GM12878 (cell line): ENCODE measurements at regions of chr20 and their contacts with region 1.

Region 1: DNA sequence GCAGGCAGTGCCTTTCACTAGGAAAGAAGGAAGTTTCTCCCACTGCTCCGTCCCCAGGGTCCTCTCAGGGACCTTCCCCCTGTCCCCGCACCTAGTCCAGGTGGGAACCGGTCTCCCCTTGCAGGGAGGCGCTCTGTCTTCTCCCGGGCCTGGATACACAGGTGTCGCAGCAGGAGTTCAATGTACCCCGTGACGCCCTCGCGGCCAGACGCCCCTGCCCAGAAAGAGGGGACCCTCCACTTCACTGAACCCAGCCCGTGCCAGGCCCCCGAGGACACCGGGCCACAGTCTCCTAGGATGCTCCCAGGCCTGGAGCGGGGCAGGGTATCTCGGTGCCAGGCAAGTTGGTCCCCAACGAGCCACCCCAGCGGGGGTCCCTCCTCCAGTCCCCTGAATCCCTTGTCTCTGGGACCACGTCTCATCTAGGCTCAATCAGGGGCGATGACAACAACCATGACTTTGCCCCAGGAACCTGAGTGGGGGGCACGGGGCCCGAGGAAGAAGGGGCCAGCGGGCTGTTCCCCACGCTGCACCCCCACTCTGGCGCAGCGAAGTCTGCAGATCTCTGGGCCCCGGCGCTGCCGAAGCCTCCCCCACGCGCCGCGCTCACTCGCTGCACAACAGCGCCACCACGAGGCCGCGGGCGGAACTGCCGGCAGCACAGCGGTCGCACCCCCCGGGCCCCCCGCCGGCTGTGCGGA is 103.0 kb downstream of the EDN3 start:
- DNase-seq: no peak
- ATAC-seq: peak; percentile 75
- H3K4me3 ChIP-seq: no peak overlapping the region
- H3K27ac ChIP-seq: no peak overlapping the region
- H3K4me1 ChIP-seq: no peaks in the 10 kb centered on the region
- H3K27me3 ChIP-seq: peaks cover 0 to 2% of the 10 kb centered on the region in 2 experiments; a peak in 2 of 4 replicates
- CTCF ChIP-seq: peak; percentile 68 to 84 (median 78)
- EP300 ChIP-seq: no peak
- POLR2A ChIP-seq: no peak
- RAD21 ChIP-seq: peak; percentile 65

Region 2: GRCh38 chr20:59331729-59332329 is 71.6 kb before region 1 on chr20:
- CTCF ChIA-PET with region 1: no interaction called
- POLR2A ChIA-PET with region 1: no interaction called
- RAD21 ChIA-PET with region 1: no interaction called
- SMC1A ChIA-PET with region 1: no interaction called
- in situ Hi-C with region 1: no loop called
- intact Hi-C with region 1: loop called (anchors 2 kb)
- DNase-seq: no peak
- ATAC-seq: no peak
- H3K4me3 ChIP-seq: no peak overlapping the region
- H3K27ac ChIP-seq: no peak overlapping the region
- H3K4me1 ChIP-seq: no peaks in the 10 kb centered on the region
- H3K27me3 ChIP-seq: peaks cover 9 to 10% of the 10 kb centered on the region in 2 experiments
- CTCF ChIP-seq: no peak
- EP300 ChIP-seq: no peak
- POLR2A ChIP-seq: no peak
- RAD21 ChIP-seq: no peak

Region 3: GRCh38 chr20:59458645-59459044 is 55.2 kb after region 1 on chr20:
- CTCF ChIA-PET with region 1: no interaction called
- POLR2A ChIA-PET with region 1: no interaction called
- RAD21 ChIA-PET with region 1: no interaction called
- SMC1A ChIA-PET with region 1: no interaction called
- in situ Hi-C with region 1: no loop called
- intact Hi-C with region 1: no loop called
- DNase-seq: no peak
- ATAC-seq: no peak
- H3K4me3 ChIP-seq: no peak overlapping the region
- H3K27ac ChIP-seq: no peak overlapping the region
- H3K4me1 ChIP-seq: no peaks in the 10 kb centered on the region
- H3K27me3 ChIP-seq: peaks cover 0 to 3% of the 10 kb centered on the region in 2 experiments; a peak in 1 of 4 replicates
- CTCF ChIP-seq: no peak
- EP300 ChIP-seq: no peak
- POLR2A ChIP-seq: no peak
- RAD21 ChIP-seq: no peak

Region 4: GRCh38 chr20:59743767-59744485 is 340.5 kb after region 1 on chr20:
- CTCF ChIA-PET with region 1: no interaction called
- POLR2A ChIA-PET with region 1: no interaction called
- RAD21 ChIA-PET with region 1: no interaction called
- SMC1A ChIA-PET with region 1: no interaction called
- in situ Hi-C with region 1: no loop called
- intact Hi-C with region 1: no loop called
- DNase-seq: no peak
- ATAC-seq: peak; percentile 78
- H3K4me3 ChIP-seq: no peak overlapping the region
- H3K27ac ChIP-seq: no peak overlapping the region
- H3K4me1 ChIP-seq: no peaks in the 10 kb centered on the region
- H3K27me3 ChIP-seq: no peaks in the 10 kb centered on the region
- CTCF ChIP-seq: peak; percentile 9 to 37 (median 35); a peak in 3 of 6 replicates
- EP300 ChIP-seq: no peak
- POLR2A ChIP-seq: no peak
- RAD21 ChIP-seq: no peak